Calu3 (cell line): ENCODE measurements at regions of chr7 and their contacts with region 1.

Region 1: GRCh38 chr7:1555809-1556540 is at the start of gene TMEM184A:
- DNase-seq: peak; percentile 100
- H3K4me3 Mint-ChIP-seq: peak within 1 kb of the TSS; percentile 79
- H3K27ac Mint-ChIP-seq: peak within 1 kb of the TSS; percentile 94
- H3K4me1 Mint-ChIP-seq: peaks cover 52% of the 10 kb centered on the region
- H3K27me3 Mint-ChIP-seq: no peaks in the 10 kb centered on the region
- CTCF ChIP-seq: peak; percentile 97
- total RNA-seq, gene TMEM184A: 61.9 and 75.8 TPM in 2 replicates

Region 2: DNA sequence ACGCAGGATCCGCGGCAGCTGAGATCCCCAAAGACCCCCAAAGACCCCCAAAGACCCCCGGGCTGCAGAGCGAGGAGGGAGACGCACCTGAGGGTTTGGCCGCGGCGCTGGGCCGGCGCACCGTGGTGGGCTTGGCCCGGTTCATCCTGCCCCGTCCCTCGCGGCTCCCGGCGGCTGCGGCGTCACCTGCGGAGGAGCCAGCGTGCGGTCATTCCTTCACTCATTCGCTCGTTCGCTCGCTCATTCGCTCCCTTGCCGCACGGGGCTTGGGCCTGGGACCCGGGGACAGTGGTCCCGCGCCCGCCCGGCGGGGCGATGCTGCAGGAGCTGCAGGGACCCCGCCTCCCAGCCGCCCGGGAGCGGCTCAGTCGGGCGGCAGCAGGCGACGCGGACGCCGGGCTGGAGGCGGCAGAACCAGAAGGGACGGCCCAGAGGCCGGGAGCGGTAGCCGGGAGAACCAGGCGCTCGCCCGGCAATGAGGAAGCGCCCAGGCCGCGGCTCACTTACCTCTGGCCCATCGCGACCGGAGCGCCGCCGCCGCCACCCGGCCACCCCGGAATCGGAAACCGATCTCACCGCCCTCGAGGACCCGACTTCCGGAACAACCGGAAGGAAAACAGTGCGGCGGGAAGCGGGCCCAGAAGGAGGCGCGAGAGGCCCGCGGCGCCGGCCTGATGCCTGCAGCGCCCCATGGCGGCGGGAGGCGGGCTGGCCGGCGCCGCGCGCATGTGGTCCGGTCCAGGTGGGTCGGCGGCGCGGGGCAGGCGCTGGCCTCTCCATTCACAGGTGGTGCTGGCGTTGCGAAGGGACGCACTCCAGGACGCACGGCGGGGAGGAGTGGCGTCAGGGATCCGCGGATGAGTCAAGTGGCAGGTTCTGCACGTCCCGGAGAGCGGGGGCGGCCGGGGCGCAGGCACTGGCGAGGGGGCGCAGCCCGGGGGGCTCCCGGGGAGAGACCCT is 51.9 kb before region 1 on chr7 and contains the start of gene INTS1:
- CTCF ChIA-PET with region 1: interaction called, 17 read pairs
- intact Hi-C with region 1: loop called (anchors 5 kb)
- DNase-seq: peak; percentile 99
- H3K4me3 Mint-ChIP-seq: peak within 1 kb of the TSS; percentile 88
- H3K27ac Mint-ChIP-seq: peak within 1 kb of the TSS; percentile 87
- H3K4me1 Mint-ChIP-seq: peaks cover 33% of the 10 kb centered on the region
- H3K27me3 Mint-ChIP-seq: no peaks in the 10 kb centered on the region
- CTCF ChIP-seq: peak; percentile 96
- total RNA-seq, gene INTS1: 177 and 192 TPM in 2 replicates

Region 3: GRCh38 chr7:1532483-1533424 is 23.2 kb before region 1 on chr7:
- CTCF ChIA-PET with region 1: interaction called, 29 read pairs
- intact Hi-C with region 1: loop called (anchors 2 kb)
- DNase-seq: peak; percentile 92
- H3K4me3 Mint-ChIP-seq: peak overlapping the region; percentile 96
- H3K27ac Mint-ChIP-seq: peak overlapping the region; percentile 89
- H3K4me1 Mint-ChIP-seq: peaks cover 47% of the 10 kb centered on the region
- H3K27me3 Mint-ChIP-seq: peaks cover 2% of the 10 kb centered on the region
- CTCF ChIP-seq: no peak

Region 4: GRCh38 chr7:1537535-1538412 is 18.2 kb before region 1 on chr7:
- CTCF ChIA-PET with region 1: interaction called, 29 read pairs
- intact Hi-C with region 1: loop called (anchors 2 kb)
- DNase-seq: peak; percentile 100
- H3K4me3 Mint-ChIP-seq: peak overlapping the region; percentile 85
- H3K27ac Mint-ChIP-seq: peak overlapping the region; percentile 98
- H3K4me1 Mint-ChIP-seq: peaks cover 52% of the 10 kb centered on the region
- H3K27me3 Mint-ChIP-seq: no peaks in the 10 kb centered on the region
- CTCF ChIP-seq: no peak

Region 5: GRCh38 chr7:3300651-3301378 is 1744.8 kb after region 1 on chr7 and contains the start of gene SDK1:
- CTCF ChIA-PET with region 1: no interaction called
- intact Hi-C with region 1: no loop called
- DNase-seq: peak; percentile 99
- H3K4me3 Mint-ChIP-seq: peak within 1 kb of the TSS; percentile 75
- H3K27ac Mint-ChIP-seq: peak within 1 kb of the TSS; percentile 70
- H3K4me1 Mint-ChIP-seq: peaks cover 19% of the 10 kb centered on the region
- H3K27me3 Mint-ChIP-seq: no peaks in the 10 kb centered on the region
- CTCF ChIP-seq: peak; percentile 94
- total RNA-seq, gene SDK1: 19.7 and 20.0 TPM in 2 replicates